Endothelial cell of umbilical vein (primary cell): ENCODE measurements at regions of chr7 and their contacts with region 1.

Region 1: GRCh38 chr7:8295638-8296361 is 33.8 kb upstream of the ICA1 start:
- DNase-seq: peak; percentile 78
- H3K4me3 ChIP-seq: no peak overlapping the region
- H3K27ac ChIP-seq: no peak overlapping the region
- H3K4me1 ChIP-seq: no peaks in the 10 kb centered on the region
- H3K27me3 ChIP-seq: peaks cover 3 to 8% of the 10 kb centered on the region in 2 experiments
- CTCF ChIP-seq: peak; percentile 56 to 64
- POLR2A ChIP-seq: no peak

Region 2: DNA sequence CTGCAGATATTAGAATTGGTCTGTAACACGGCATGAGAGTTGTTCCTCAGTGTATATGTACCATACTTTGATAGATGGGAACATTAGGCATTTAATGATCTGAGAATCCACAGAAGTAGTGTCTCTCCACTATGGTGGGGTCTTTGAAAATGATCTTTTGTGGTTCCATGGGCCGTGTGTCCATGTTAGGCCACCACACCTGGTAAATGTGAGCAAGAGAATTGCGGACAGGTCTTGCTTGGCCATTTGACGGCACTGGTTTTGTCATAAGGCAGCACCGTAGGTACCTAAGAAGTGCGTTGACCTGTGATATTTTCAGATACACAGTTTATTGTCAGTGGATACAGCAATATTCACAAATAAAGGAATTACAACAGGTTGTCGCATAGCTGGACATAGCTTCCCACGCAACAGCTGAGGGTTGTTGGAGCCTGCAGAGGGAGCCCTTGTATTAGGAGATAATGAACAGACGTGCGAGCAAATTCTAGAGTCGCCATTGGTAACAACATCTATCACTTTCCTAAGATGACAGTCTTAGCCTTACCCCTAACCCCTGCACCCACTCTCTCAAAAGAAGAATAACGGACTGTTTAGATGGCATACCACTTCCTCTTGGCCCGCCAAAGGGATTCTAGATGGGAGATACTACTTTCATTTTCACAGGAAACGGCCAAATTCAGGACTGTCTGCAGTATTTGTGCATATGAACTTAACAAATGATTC is 871.5 kb before region 1 on chr7:
- CTCF ChIA-PET with region 1: interaction called, 27 read pairs
- POLR2A ChIA-PET with region 1: no interaction called
- dilution Hi-C with region 1: no loop called
- intact Hi-C with region 1: loop called (anchors 1 kb)
- DNase-seq: peak; percentile 67
- H3K4me3 ChIP-seq: peak overlapping the region; percentile 37 to 93 (median 81)
- H3K27ac ChIP-seq: peak overlapping the region; percentile 3
- H3K4me1 ChIP-seq: peaks cover 2% of the 10 kb centered on the region
- H3K27me3 ChIP-seq: peaks cover 0 to 2% of the 10 kb centered on the region in 2 experiments
- CTCF ChIP-seq: peak; percentile 73 to 82
- POLR2A ChIP-seq: no peak

Region 3: GRCh38 chr7:7662527-7662926 is 633.3 kb before region 1 on chr7:
- CTCF ChIA-PET with region 1: interaction called, 8 read pairs
- POLR2A ChIA-PET with region 1: no interaction called
- dilution Hi-C with region 1: no loop called
- intact Hi-C with region 1: loop called (anchors 5 kb)
- DNase-seq: no peak
- H3K4me3 ChIP-seq: no peak overlapping the region
- H3K27ac ChIP-seq: no peak overlapping the region
- H3K4me1 ChIP-seq: no peaks in the 10 kb centered on the region
- H3K27me3 ChIP-seq: no peaks in the 10 kb centered on the region
- CTCF ChIP-seq: peak in 1 of 2 donors; percentile 5
- POLR2A ChIP-seq: no peak

Region 4: GRCh38 chr7:8035647-8036518 is 259.9 kb before region 1 on chr7:
- CTCF ChIA-PET with region 1: interaction called, 6 read pairs
- POLR2A ChIA-PET with region 1: no interaction called
- dilution Hi-C with region 1: no loop called
- intact Hi-C with region 1: loop called (anchors 10 kb)
- DNase-seq: peak; percentile 46
- H3K4me3 ChIP-seq: no peak overlapping the region
- H3K27ac ChIP-seq: no peak overlapping the region
- H3K4me1 ChIP-seq: no peaks in the 10 kb centered on the region
- H3K27me3 ChIP-seq: no peaks in the 10 kb centered on the region
- CTCF ChIP-seq: peak; percentile 33 to 46
- POLR2A ChIP-seq: no peak

Region 5: GRCh38 chr7:8217200-8218068 is 78.4 kb before region 1 on chr7:
- CTCF ChIA-PET with region 1: interaction called, 25 read pairs
- POLR2A ChIA-PET with region 1: no interaction called
- dilution Hi-C with region 1: no loop called
- intact Hi-C with region 1: loop called (anchors 1 kb)
- DNase-seq: peak; percentile 67
- H3K4me3 ChIP-seq: no peak overlapping the region
- H3K27ac ChIP-seq: no peak overlapping the region
- H3K4me1 ChIP-seq: no peaks in the 10 kb centered on the region
- H3K27me3 ChIP-seq: no peaks in the 10 kb centered on the region
- CTCF ChIP-seq: peak; percentile 32 to 40
- POLR2A ChIP-seq: no peak

Region 6: DNA sequence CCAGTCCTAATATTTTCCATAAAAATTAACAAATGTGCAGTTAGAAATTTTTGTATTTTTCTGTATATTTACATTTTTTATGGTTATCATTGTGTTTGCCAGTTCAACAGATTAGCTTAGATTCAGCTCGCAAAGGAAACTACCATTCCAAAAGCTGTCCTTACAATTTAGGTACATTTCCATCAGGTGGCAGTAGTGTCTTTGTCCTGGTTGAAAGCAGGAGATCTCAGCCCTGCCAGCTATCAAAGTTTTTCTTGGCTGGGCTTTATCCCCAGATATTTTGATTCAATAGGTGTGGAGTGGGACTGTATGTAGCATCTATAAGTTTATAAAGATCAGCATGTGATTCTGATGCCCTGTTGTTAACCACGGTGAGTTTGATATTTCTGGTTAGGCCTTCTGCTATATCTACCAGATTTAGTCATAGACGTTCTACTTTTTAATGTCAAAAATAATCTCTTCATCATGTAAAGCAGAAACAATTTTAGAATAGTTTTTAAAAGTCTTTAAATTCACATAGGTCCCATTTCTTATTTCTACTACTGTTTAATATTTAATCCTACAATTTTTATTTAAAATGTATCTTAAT is 18.3 kb before region 1 on chr7:
- CTCF ChIA-PET with region 1: interaction called, 37 read pairs
- POLR2A ChIA-PET with region 1: no interaction called
- dilution Hi-C with region 1: no loop called
- intact Hi-C with region 1: no loop called
- DNase-seq: peak; percentile 12
- H3K4me3 ChIP-seq: no peak overlapping the region
- H3K27ac ChIP-seq: no peak overlapping the region
- H3K4me1 ChIP-seq: no peaks in the 10 kb centered on the region
- H3K27me3 ChIP-seq: peaks cover 0 to 3% of the 10 kb centered on the region in 2 experiments
- CTCF ChIP-seq: no peak
- POLR2A ChIP-seq: no peak

Region 7: GRCh38 chr7:8305625-8306381 is 10.0 kb after region 1 on chr7:
- CTCF ChIA-PET with region 1: interaction called, 10 read pairs
- POLR2A ChIA-PET with region 1: no interaction called
- dilution Hi-C with region 1: no loop called
- intact Hi-C with region 1: no loop called
- DNase-seq: no peak
- H3K4me3 ChIP-seq: no peak overlapping the region
- H3K27ac ChIP-seq: no peak overlapping the region
- H3K4me1 ChIP-seq: no peaks in the 10 kb centered on the region
- H3K27me3 ChIP-seq: no peaks in the 10 kb centered on the region
- CTCF ChIP-seq: no peak
- POLR2A ChIP-seq: no peak

Region 8: GRCh38 chr7:8327199-8327598 is 31.4 kb after region 1 on chr7:
- CTCF ChIA-PET with region 1: no interaction called
- POLR2A ChIA-PET with region 1: no interaction called
- dilution Hi-C with region 1: no loop called
- intact Hi-C with region 1: no loop called
- DNase-seq: no peak
- H3K4me3 ChIP-seq: no peak overlapping the region
- H3K27ac ChIP-seq: no peak overlapping the region
- H3K4me1 ChIP-seq: no peaks in the 10 kb centered on the region
- H3K27me3 ChIP-seq: no peaks in the 10 kb centered on the region
- CTCF ChIP-seq: no peak
- POLR2A ChIP-seq: no peak

Region 9: DNA sequence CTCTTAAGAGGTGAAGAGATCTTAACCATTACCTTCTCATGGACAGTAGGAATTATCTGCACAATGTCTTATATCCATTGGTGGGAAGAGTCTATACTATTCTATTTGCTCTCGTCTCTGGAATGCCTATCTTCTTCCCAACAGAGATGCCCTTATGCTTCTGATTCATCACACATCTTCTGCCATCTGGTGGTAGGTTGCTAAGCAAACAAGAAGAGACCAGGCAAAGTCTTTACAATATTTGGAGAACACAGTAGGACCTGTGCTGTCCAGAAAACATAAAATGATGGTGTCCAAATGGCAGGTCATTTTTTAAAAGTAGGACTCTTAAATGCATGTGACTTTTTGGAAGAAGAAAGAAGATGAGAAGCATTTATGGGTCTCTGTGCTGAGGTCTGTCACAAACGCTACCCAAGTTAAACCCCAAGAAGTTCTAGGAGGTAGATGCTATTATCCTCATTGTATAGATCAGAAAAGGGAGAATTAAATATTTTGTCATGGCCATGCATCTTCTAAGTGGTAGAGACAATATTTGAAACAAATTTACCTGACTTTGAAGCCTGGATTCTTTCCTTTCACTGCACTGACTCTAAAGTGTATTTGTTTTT is 69.8 kb after region 1 on chr7:
- CTCF ChIA-PET with region 1: no interaction called
- POLR2A ChIA-PET with region 1: no interaction called
- dilution Hi-C with region 1: no loop called
- intact Hi-C with region 1: no loop called
- DNase-seq: no peak
- H3K4me3 ChIP-seq: no peak overlapping the region
- H3K27ac ChIP-seq: no peak overlapping the region
- H3K4me1 ChIP-seq: no peaks in the 10 kb centered on the region
- H3K27me3 ChIP-seq: no peaks in the 10 kb centered on the region
- CTCF ChIP-seq: no peak
- POLR2A ChIP-seq: no peak